ENCODE measurements at regions of chr1 and their contacts with region 1.

Region 1: DNA sequence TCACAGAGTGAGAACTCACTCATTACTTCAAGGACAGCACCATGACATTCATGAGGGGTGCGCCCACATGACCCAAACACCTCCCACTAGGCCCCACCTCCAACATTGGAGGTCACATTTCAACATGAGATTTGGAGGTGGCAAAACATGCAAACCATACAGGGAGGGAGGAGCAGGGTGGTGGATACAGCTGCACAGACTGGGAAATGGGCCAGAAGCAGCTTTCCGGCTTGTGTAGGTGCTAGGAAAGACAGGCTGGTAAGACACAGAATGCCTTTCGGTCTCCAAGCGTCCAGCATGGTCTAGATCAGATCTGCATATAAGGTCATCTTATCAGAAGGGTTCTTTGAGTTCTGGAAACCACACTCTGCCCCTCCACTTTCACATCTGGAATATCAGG is 35.1 kb upstream of the TINAGL1 start:
- ATAC-seq: peak in 2 of 8 experiments; percentile 34 to 80
- H3K4me3 ChIP-seq: no peak overlapping the region
- H3K27ac ChIP-seq: no peak overlapping the region
- H3K4me1 ChIP-seq: no peaks in the 10 kb centered on the region

Region 2: DNA sequence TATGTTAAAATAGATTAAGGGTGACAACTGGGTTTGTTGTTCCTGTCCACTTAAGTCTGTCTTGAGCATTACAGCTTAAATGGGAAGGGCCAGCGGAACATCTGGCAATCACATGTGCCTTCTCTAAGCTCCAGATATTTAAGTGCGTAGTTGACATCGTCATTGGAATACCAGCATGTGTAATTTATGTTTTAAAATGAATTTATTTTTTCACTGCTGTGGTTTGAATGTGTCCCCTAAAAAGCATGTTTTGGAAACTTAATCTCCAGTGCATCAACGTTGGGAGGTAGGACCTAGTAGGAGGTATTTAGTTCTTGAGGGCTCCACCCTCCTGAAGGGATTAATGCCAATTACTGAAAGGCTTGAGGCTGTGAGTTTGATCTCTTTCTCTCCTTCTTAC is 231.0 kb before region 1 on chr1:
- in situ Hi-C with region 1: no loop called
- ATAC-seq: peak in 3 of 8 experiments; percentile 86 to 93 (median 93)
- H3K4me3 ChIP-seq: no peak overlapping the region
- H3K27ac ChIP-seq: no peak overlapping the region
- H3K4me1 ChIP-seq: peaks cover 0 to 3% of the 10 kb centered on the region in 2 donors

Region 3: GRCh38 chr1:31460027-31460426 is 81.2 kb before region 1 on chr1:
- in situ Hi-C with region 1: loop called in 1 of 9 experiments (anchors 5 kb)
- ATAC-seq: peak in 1 of 8 experiments; percentile 50
- H3K4me3 ChIP-seq: no peak overlapping the region
- H3K27ac ChIP-seq: no peak overlapping the region
- H3K4me1 ChIP-seq: no peaks in the 10 kb centered on the region

Region 4: GRCh38 chr1:31705080-31705866 is 164.1 kb after region 1 on chr1:
- in situ Hi-C with region 1: no loop called
- ATAC-seq: peak; percentile 10 to 83 (median 40)
- H3K4me3 ChIP-seq: no peak overlapping the region
- H3K27ac ChIP-seq: no peak overlapping the region
- H3K4me1 ChIP-seq: peaks cover 59 to 68% of the 10 kb centered on the region in 2 donors